ENCODE measurements at regions of chr1 and their contacts with region 1.

Region 1: DNA sequence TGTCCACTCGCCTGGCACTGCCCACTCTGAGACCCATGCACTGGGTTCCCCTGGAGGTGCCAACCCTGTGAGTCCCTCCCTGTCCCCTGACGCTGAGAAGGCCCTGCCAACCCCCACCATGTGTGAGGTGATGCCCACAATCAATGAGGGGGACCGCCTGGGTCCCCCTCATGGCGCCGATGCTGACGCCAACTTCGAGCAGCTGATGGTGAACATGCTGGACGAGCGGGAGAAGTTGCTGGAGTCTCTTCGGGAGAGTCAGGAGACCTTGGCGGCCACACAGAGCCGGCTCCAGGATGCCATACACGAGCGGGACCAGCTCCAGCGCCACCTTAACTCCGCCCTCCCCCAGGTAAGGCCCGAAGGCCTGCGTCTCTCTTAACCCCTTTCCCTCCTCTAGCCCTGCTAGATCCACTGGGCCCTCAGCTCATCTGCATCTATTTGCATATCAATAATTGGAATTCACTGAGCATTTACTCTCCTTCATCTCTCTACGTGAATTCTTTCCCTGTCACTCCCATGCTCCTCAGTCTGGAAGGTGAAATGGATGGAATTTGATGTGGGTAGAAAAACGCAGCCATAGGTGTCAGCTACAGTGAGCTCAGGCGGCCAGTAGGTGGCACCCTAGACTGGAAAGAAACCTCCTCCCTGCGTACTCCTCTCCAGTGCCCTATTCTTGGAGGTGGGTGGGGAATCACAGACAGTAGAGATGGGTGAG is 12.8 kb downstream of the PPFIA4 start:
- DNase-seq: peak; percentile 67
- H3K4me3 Mint-ChIP-seq: no peak overlapping the region
- H3K27ac Mint-ChIP-seq: no peak overlapping the region
- H3K4me1 Mint-ChIP-seq: peaks cover 10% of the 10 kb centered on the region
- H3K27me3 Mint-ChIP-seq: no peaks in the 10 kb centered on the region

Region 2: GRCh38 chr1:203026031-203026989 is 12.7 kb before region 1 on chr1 and contains the start of gene PPFIA4:
- CTCF ChIA-PET with region 1: interaction called, 27 read pairs
- POLR2A ChIA-PET with region 1: interaction called, 3 read pairs
- DNase-seq: peak; percentile 92
- H3K4me3 Mint-ChIP-seq: peak within 1 kb of the TSS; percentile 73
- H3K27ac Mint-ChIP-seq: peak within 1 kb of the TSS; percentile 52
- H3K4me1 Mint-ChIP-seq: peaks cover 22% of the 10 kb centered on the region
- H3K27me3 Mint-ChIP-seq: peaks cover 14% of the 10 kb centered on the region
- total RNA-seq, gene PPFIA4: 28.9 to 29.3 TPM

Region 3: GRCh38 chr1:203051841-203052324 is 12.8 kb after region 1 on chr1:
- CTCF ChIA-PET with region 1: interaction called, 19 read pairs
- POLR2A ChIA-PET with region 1: interaction called, 3 read pairs
- DNase-seq: no peak
- H3K4me3 Mint-ChIP-seq: no peak overlapping the region
- H3K27ac Mint-ChIP-seq: no peak overlapping the region
- H3K4me1 Mint-ChIP-seq: peaks cover 3% of the 10 kb centered on the region
- H3K27me3 Mint-ChIP-seq: peaks cover 6% of the 10 kb centered on the region

Region 4: DNA sequence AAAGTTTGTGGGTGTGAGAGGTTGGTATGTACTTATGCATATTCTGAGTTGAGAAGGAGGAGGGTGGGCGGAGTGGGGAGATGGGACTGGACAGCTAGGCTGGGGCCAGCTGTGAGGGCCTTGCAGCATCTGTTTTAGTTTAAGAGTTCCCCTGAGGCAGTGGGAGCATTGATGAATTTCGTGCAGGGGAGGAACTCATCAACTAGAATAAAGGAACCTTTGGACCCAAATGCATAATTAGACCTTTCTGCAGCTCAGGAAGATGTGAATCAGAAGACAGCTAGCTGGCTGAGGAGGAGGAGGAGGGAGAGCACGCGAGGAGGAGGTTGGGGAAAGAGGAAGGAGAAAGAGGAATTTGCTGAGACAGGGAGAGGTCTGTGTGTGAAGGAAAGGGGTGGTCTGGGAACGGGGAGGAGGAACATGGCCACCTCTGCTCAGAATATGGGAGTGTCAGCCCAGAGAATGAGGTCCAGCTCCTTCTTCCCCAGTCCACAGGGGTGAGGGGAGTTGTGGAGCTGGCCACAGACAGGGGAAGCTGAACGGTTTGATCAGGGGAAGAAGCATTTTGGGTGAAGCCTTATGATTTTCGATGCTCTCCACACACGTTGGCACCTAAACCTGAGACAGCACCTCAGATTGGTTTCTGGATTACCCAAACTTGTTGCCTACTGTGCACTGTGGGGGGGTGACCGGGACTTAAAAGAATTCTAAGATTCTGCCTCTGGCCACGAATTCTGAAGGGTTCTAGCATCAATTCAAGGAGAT is 19.0 kb after region 1 on chr1:
- CTCF ChIA-PET with region 1: interaction called, 19 read pairs
- POLR2A ChIA-PET with region 1: interaction called, 3 read pairs
- DNase-seq: no peak
- H3K4me3 Mint-ChIP-seq: no peak overlapping the region
- H3K27ac Mint-ChIP-seq: no peak overlapping the region
- H3K4me1 Mint-ChIP-seq: no peaks in the 10 kb centered on the region
- H3K27me3 Mint-ChIP-seq: no peaks in the 10 kb centered on the region

Region 5: DNA sequence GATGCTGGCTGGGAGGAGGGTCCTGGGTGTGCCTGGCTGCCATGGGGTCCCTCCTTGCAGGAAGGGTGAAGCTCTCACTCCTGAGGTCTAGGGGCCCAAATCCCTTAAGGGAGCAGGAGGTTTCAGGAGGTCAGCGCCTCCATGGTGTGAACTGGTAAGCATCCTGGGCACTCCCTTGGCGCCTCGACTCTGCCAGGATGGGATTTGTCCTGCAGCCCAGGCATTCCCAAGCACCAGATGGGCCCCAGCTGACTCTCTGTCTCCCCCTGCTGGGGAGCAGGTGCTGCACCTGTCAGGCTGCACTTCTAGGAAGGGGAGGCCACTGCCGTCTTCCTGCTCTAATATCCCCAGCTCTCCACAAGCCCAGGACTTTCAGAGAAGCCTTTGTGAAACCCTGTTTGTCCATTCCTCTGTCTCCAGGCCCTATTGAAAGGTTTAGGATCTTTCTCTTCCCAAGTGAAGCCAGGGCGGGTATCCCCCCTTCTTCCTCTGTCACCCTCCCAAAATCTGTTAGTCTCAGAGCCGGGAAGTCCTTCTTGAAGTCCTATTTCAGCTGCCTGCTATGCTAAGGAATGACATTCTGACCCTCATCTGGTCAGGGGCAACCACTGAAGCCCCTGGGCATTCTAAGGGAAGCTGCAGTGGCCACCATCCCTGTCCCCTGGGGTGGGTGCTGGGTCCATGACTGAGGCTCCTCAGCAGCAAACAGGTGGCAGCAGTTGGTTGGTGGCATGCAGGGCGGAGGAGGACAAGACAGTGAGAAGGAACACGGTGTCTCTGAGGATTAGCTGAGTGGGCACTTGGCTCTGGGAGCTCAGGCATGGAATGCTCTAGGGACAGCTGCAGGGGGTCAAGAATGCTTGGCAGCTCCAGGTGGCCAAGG is 133.3 kb after region 1 on chr1:
- CTCF ChIA-PET with region 1: interaction called, 44 read pairs
- POLR2A ChIA-PET with region 1: no interaction called
- DNase-seq: peak; percentile 64
- H3K4me3 Mint-ChIP-seq: no peak overlapping the region
- H3K27ac Mint-ChIP-seq: no peak overlapping the region
- H3K4me1 Mint-ChIP-seq: no peaks in the 10 kb centered on the region
- H3K27me3 Mint-ChIP-seq: no peaks in the 10 kb centered on the region

Region 6: GRCh38 chr1:203216274-203217138 is 177.5 kb after region 1 on chr1:
- CTCF ChIA-PET with region 1: interaction called, 105 read pairs
- POLR2A ChIA-PET with region 1: interaction called, 4 read pairs
- DNase-seq: peak; percentile 55
- H3K4me3 Mint-ChIP-seq: no peak overlapping the region
- H3K27ac Mint-ChIP-seq: no peak overlapping the region
- H3K4me1 Mint-ChIP-seq: no peaks in the 10 kb centered on the region
- H3K27me3 Mint-ChIP-seq: peaks cover 16% of the 10 kb centered on the region

Region 7: GRCh38 chr1:203267347-203267846 is 228.3 kb after region 1 on chr1:
- CTCF ChIA-PET with region 1: interaction called, 23 read pairs
- POLR2A ChIA-PET with region 1: no interaction called
- DNase-seq: peak; percentile 86
- H3K4me3 Mint-ChIP-seq: peak overlapping the region; percentile 76
- H3K27ac Mint-ChIP-seq: peak overlapping the region; percentile 55
- H3K4me1 Mint-ChIP-seq: peaks cover 22% of the 10 kb centered on the region
- H3K27me3 Mint-ChIP-seq: peaks cover 6% of the 10 kb centered on the region